ENCODE measurements at regions of chr9 and their contacts with region 1.

Region 1: GRCh38 chr9:33024966-33025571 is at the start of gene DNAJA1:
- DNase-seq: peak; percentile 60 to 96
- H3K4me3 ChIP-seq: peak within 1 kb of the TSS; percentile 95 to 99 (median 98)
- H3K27ac ChIP-seq: peak within 1 kb of the TSS; percentile 94
- H3K4me1 ChIP-seq: peaks cover 0 to 8% (median 3%) of the 10 kb centered on the region in 4 experiments; a peak in 4 of 7 replicates
- H3K27me3 ChIP-seq: no peaks in the 10 kb centered on the region
- CTCF ChIP-seq: no peak
- EP300 ChIP-seq: no peak
- POLR2A ChIP-seq: peak; percentile 99
- RAD21 ChIP-seq: no peak
- total RNA-seq, gene DNAJA1: 159 and 169 TPM in 2 replicates

Region 2: GRCh38 chr9:33007755-33008154 is 17.3 kb before region 1 on chr9:
- CTCF ChIA-PET with region 1: interaction called, 5 read pairs
- POLR2A ChIA-PET with region 1: interaction called, 160 read pairs
- DNase-seq: no peak
- H3K4me3 ChIP-seq: no peak overlapping the region
- H3K27ac ChIP-seq: no peak overlapping the region
- H3K4me1 ChIP-seq: no peaks in the 10 kb centered on the region
- H3K27me3 ChIP-seq: no peaks in the 10 kb centered on the region
- CTCF ChIP-seq: no peak
- EP300 ChIP-seq: no peak
- POLR2A ChIP-seq: no peak
- RAD21 ChIP-seq: no peak

Region 3: GRCh38 chr9:33049680-33050361 is 24.8 kb after region 1 on chr9:
- CTCF ChIA-PET with region 1: interaction called, 5 read pairs
- POLR2A ChIA-PET with region 1: interaction called, 78 read pairs
- DNase-seq: no peak
- H3K4me3 ChIP-seq: no peak overlapping the region
- H3K27ac ChIP-seq: no peak overlapping the region
- H3K4me1 ChIP-seq: no peaks in the 10 kb centered on the region
- H3K27me3 ChIP-seq: no peaks in the 10 kb centered on the region
- CTCF ChIP-seq: no peak
- EP300 ChIP-seq: no peak
- POLR2A ChIP-seq: no peak
- RAD21 ChIP-seq: no peak

Region 4: GRCh38 chr9:33076358-33077004 is 51.4 kb after region 1 on chr9 and contains the start of gene SMU1:
- CTCF ChIA-PET with region 1: no interaction called
- POLR2A ChIA-PET with region 1: interaction called, 18 read pairs
- DNase-seq: peak; percentile 92 to 95
- H3K4me3 ChIP-seq: peak within 1 kb of the TSS; percentile 91 to 99 (median 94)
- H3K27ac ChIP-seq: peak within 1 kb of the TSS; percentile 85
- H3K4me1 ChIP-seq: no peaks in the 10 kb centered on the region; a peak in 1 of 7 replicates
- H3K27me3 ChIP-seq: no peaks in the 10 kb centered on the region
- CTCF ChIP-seq: no peak
- EP300 ChIP-seq: no peak
- POLR2A ChIP-seq: peak; percentile 82 to 92
- RAD21 ChIP-seq: no peak
- total RNA-seq, gene SMU1: 25.2 and 26.0 TPM in 2 replicates

Region 5: DNA sequence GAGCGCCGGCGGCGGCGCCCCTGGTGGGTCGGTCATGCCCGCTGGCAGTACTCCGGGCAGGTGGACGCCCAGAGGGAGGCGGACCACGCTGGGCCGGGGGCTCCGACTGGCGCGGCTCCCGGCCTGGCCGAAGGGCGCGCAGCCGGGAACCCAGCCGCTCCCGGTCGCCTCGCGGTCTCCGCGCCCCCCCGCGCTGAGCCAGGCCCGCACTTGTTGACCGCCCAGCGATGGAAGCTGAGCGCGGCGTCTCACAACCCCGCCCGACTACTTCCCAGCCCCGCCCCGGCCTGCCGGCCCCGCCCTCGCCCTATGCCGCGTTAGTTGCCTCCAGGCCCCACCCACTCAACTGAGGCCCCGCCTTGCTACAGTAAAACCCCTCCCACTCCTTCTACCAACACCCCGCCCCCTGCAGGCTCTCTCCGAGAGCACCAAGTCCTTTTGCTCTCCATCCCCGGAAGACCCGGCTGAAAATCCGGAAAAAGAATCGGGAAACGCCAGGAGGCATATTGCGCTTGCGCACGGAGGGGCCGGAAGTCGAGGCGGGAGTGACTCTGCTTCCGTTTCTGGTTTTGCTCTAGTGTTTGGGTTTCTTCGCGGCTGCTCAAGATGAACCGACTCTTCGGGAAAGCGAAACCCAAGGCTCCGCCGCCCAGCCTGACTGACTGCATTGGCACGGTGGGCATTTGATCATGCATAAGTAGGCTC is 239.6 kb after region 1 on chr9 and contains the starts of genes BAG1 and CHMP5:
- CTCF ChIA-PET with region 1: no interaction called
- POLR2A ChIA-PET with region 1: interaction called, 18 read pairs
- DNase-seq: peak; percentile 99
- H3K4me3 ChIP-seq: peak within 1 kb of the TSS; percentile 86 to 99 (median 96)
- H3K27ac ChIP-seq: peak within 1 kb of the TSS; percentile 31
- H3K4me1 ChIP-seq: peaks cover 0 to 2% (median 2%) of the 10 kb centered on the region in 4 experiments; a peak in 2 of 7 replicates
- H3K27me3 ChIP-seq: no peaks in the 10 kb centered on the region
- CTCF ChIP-seq: peak; percentile 8 to 33 (median 23); a peak in 2 of 4 replicates
- EP300 ChIP-seq: no peak
- POLR2A ChIP-seq: peak in 1 of 2 experiments; percentile 66; a peak in 1 of 3 replicates
- RAD21 ChIP-seq: no peak
- total RNA-seq, gene BAG1: 59.8 and 61.5 TPM in 2 replicates
- total RNA-seq, gene CHMP5: 44.1 and 47.3 TPM in 2 replicates